ENCODE measurements at regions of chr11 and their contacts with region 1.

Region 1: DNA sequence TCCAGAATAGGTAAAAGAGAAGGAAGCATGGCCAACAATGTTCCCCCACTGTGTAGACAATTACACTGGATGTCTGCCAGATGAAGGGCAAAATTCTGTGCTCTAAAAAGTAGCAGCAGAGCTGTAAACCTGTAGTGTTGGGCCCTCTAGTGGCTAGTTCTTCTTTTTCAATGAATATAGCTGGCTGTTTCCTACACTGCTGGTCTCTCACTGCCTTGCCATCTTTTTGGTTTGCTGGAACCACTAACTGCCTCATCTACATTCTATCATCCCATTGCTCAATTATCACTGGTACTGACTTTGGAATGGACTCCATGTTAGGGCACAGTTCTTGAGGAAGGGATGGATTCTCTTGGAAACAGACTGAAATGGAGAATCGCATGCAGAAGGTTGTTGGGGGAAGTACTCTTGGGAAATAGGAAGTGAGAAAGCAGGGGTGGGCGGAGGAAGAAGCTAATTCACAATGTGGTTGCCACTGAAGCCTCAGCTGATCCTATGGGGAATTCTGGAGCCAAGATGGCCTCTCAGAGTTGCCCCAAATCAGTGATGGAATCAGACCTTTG is 17.9 kb downstream of the KCNE3 start:
- DNase-seq: peak in 3 of 10 donors; percentile 15 to 70 (median 45)
- H3K4me3 ChIP-seq: no peak overlapping the region
- H3K27ac ChIP-seq: no peak overlapping the region
- H3K27me3 ChIP-seq: no peaks in the 10 kb centered on the region
- CTCF ChIP-seq: peak; percentile 65 to 95 (median 84)

Region 2: DNA sequence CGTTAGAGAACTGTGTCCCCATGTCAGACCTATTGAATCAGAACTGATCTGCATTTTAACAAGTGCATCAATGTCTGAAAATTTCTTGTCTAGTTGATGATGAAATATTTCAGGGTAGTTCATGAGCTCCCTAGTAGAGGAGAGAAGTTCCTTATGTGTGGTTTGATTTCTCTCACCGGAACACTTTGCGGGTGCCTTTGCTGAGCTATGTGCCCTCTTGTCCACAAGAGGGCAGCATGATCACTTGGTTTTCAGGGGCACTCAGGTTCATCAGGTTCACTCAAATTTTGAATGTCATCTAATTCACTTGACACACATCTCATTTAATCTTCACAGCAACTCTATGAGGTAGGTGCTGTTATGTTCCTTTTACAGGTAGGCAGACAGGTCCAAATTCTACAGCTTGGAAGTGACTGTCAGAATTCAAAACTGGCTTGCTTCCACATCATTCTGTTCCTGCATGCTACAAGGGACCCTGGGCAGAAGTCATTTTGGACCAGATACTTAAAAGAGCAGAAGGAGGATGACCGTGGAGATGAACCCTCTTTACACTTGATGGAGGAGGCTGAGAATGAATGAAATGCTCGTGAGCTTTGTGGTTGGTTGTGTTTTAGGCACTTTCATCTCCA is 193.6 kb before region 1 on chr11:
- intact Hi-C with region 1: loop called (anchors 1 to 10 kb)
- DNase-seq: peak in 7 of 10 donors; percentile 7 to 58 (median 43)
- H3K4me3 ChIP-seq: no peak overlapping the region
- H3K27ac ChIP-seq: no peak overlapping the region
- H3K27me3 ChIP-seq: no peaks in the 10 kb centered on the region
- CTCF ChIP-seq: peak; percentile 72 to 97 (median 92)

Region 3: DNA sequence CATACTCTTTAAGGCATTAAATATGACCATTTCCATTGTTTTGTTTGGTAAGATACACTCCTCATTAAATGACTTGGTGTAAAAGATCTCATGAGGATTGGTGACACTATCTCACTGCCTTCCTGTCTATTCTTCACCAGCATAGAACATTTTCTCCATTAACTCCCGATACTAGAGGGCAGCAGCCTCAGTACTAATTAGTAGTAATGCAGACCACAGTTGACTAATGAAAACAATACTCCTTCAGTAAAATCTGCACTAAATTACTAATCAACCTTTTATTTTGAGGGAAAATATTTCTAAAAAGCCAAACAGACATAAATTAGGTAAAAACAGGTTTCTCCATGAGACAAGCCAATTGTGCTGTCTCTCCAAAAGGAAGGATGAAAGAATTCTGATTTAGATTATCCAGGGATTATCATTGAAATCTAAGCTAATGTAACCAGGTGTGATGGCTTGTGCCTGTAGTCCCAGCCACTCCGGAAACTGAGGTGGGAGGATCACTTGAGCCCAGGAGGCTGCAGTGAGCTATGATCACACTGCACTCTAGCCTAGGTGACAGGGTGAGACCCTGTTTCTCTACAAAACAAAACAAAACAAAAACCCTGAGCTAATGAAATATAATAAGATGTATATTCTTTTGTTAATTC is 60.6 kb before region 1 on chr11:
- intact Hi-C with region 1: loop called in 1 of 2 experiments (anchors 2 kb)
- DNase-seq: peak in 3 of 10 donors; percentile 51 to 73 (median 66)
- H3K4me3 ChIP-seq: no peak overlapping the region
- H3K27ac ChIP-seq: no peak overlapping the region
- H3K27me3 ChIP-seq: no peaks in the 10 kb centered on the region
- CTCF ChIP-seq: peak; percentile 30 to 92 (median 78)

Region 4: GRCh38 chr11:74559934-74560309 is 110.5 kb after region 1 on chr11:
- intact Hi-C with region 1: no loop called
- DNase-seq: no peak
- H3K4me3 ChIP-seq: no peak overlapping the region
- H3K27ac ChIP-seq: no peak overlapping the region
- H3K27me3 ChIP-seq: peaks cover 0 to 3% (median 0%) of the 10 kb centered on the region in 45 donors
- CTCF ChIP-seq: no peak

Region 5: DNA sequence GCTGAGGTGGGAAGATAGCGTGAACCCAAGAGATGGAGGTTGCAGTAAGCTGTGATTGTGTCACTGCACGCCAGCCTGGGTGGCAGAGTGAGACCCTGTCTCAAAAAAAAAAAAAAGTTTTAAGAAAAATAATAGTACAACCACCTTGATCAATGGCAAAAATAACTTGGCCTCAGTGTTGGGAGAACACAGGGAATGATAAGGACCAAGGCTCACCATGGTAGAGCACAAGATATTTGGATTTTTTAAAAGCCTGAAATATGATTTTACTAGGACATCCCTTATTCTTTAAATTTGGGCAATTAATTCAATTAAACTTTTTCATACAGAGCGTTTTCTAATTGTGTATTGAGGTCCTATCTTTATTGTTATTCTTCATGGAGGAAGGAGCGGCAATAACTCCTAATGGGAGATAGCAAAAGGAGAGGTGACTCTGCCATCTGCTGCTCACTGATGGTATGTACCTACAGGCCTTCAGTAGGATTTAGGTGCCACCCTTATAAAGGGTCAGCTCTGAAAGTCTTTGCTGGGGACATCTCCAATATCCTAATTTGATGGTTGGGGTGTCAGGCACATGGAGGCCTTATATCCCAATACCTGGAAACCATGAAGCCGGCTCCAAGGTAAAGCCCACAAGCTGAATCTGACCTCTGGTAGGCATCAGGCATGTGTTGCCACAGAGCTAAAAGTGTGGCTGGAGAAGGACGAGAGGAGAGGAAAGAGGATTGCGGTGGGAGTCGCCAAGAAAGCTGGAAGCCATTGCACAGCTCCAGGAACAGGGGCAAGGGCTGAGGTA is 121.0 kb after region 1 on chr11:
- intact Hi-C with region 1: loop called in 1 of 2 experiments (anchors 5 kb)
- DNase-seq: peak in 2 of 10 donors; percentile 12 to 39
- H3K4me3 ChIP-seq: no peak overlapping the region
- H3K27ac ChIP-seq: no peak overlapping the region
- H3K27me3 ChIP-seq: no peaks in the 10 kb centered on the region
- CTCF ChIP-seq: peak in 54 of 56 donors; percentile 23 to 76 (median 58)

Measured in dorsolateral prefrontal cortex (tissue), 120 donors.